ENCODE measurements at regions of chr17 and their contacts with region 1.

Region 1: DNA sequence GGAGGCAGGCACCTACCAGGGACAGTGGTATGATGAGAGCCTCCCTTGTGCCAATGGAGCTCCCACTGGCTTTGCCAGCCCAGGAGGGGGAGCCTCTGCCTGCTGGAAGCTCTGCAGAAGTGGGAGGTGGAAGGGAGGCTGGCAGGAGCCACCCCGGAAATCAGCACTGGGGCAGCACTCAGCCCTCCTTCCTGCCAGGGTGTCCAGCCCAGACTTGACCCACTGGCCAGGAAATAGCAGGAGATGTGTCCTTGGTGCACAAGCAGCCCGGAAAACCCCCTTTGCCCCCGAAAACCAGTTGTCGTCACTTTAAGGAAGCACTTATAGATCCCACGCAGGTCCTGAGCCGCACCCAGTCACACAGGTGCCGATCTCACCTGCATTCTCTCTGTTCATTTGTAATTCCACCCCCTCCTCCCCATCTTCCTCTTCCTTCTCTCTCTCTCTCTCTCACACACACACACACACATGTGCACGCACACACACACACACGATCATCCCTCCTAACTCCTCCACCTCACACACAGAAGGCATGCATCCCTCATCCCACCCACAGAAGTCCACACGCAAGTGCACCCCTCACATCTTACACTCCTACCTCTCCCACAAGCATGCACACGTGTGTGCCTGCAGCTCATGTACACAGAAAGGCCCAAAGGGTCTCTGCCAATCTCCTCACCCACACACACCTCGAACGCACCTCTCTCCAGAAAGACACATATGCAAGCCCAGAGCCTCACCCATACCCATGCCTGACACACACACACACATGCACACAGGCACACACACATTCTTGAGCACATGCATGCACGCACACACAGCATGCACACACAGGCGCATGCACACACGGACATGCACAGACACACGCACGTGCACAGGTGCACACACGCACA is 49.1 kb upstream of the CACNG4 start:
- DNase-seq: peak; percentile 76
- H3K4me3 ChIP-seq: no peak overlapping the region
- H3K27ac ChIP-seq: no peak overlapping the region
- H3K4me1 ChIP-seq: peaks cover 0 to 6% of the 10 kb centered on the region in 2 experiments; a peak in 1 of 4 replicates
- H3K27me3 ChIP-seq: no peaks in the 10 kb centered on the region; the same call in 1 of the 2 replicates
- CTCF ChIP-seq: peak; percentile 58
- EP300 ChIP-seq: no peak
- RAD21 ChIP-seq: peak; percentile 89

Region 2: DNA sequence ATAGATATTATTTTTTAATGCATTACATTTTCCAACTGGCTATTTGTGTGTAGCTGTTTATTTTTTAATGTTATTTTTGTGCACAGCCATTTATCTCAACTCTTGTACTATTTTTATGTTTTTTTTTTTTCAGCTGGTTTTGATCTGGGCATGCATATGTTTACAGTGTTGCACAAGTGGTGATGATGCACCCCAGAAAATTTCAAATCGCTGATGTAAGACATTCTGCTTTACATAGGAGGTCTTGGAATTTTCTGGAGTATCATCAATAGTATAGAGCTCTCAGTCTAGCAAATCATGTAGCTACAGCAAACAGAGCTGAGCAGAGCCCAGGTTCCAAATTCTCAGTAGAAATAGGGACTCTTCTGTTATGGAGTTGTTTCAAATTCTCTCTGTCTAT is 50.3 kb before region 1 on chr17:
- CTCF ChIA-PET with region 1: no interaction called
- POLR2A ChIA-PET with region 1: no interaction called
- DNase-seq: no peak
- H3K4me3 ChIP-seq: no peak overlapping the region
- H3K27ac ChIP-seq: no peak overlapping the region
- H3K4me1 ChIP-seq: no peaks in the 10 kb centered on the region
- H3K27me3 ChIP-seq: peaks cover 12% of the 10 kb centered on the region; the same call in 1 of the 2 replicates
- CTCF ChIP-seq: no peak
- EP300 ChIP-seq: no peak
- RAD21 ChIP-seq: no peak

Region 3: GRCh38 chr17:66951935-66952662 is 36.6 kb after region 1 on chr17:
- CTCF ChIA-PET with region 1: interaction called, 16 read pairs
- POLR2A ChIA-PET with region 1: no interaction called
- DNase-seq: no peak
- H3K4me3 ChIP-seq: no peak overlapping the region; a peak in 1 of 4 replicates
- H3K27ac ChIP-seq: peak overlapping the region; percentile 85 to 96
- H3K4me1 ChIP-seq: peaks cover 16 to 54% of the 10 kb centered on the region in 2 experiments
- H3K27me3 ChIP-seq: no peaks in the 10 kb centered on the region
- CTCF ChIP-seq: no peak
- EP300 ChIP-seq: peak in 1 of 2 experiments; percentile 91; a peak in 2 of 4 replicates
- RAD21 ChIP-seq: no peak

Region 4: GRCh38 chr17:67027031-67027628 is 111.7 kb after region 1 on chr17:
- CTCF ChIA-PET with region 1: no interaction called
- POLR2A ChIA-PET with region 1: no interaction called
- DNase-seq: no peak
- H3K4me3 ChIP-seq: no peak overlapping the region
- H3K27ac ChIP-seq: peak overlapping the region in 1 of 2 experiments; percentile 4; a peak in 1 of 4 replicates
- H3K4me1 ChIP-seq: peaks cover 0 to 7% of the 10 kb centered on the region in 2 experiments; a peak in 1 of 4 replicates
- H3K27me3 ChIP-seq: no peaks in the 10 kb centered on the region
- CTCF ChIP-seq: no peak
- EP300 ChIP-seq: no peak
- RAD21 ChIP-seq: no peak

Region 5: GRCh38 chr17:67046398-67046797 is 130.9 kb after region 1 on chr17:
- CTCF ChIA-PET with region 1: no interaction called
- POLR2A ChIA-PET with region 1: no interaction called
- DNase-seq: no peak
- H3K4me3 ChIP-seq: no peak overlapping the region
- H3K27ac ChIP-seq: no peak overlapping the region
- H3K4me1 ChIP-seq: peaks cover 0 to 3% of the 10 kb centered on the region in 2 experiments; a peak in 1 of 4 replicates
- H3K27me3 ChIP-seq: no peaks in the 10 kb centered on the region; the same call in 1 of the 2 replicates
- CTCF ChIP-seq: no peak
- EP300 ChIP-seq: no peak
- RAD21 ChIP-seq: no peak

Measured in SK-N-SH (cell line).